GM18951 (cell line): ENCODE measurements at regions of chr17 and their contacts with region 1.

Region 1: GRCh38 chr17:20825539-20825938 is 217.3 kb downstream of the USP22 start:
- POLR2A ChIP-seq: no peak

Region 2: GRCh38 chr17:20721171-20721570 is 104.4 kb before region 1 on chr17:
- in situ Hi-C with region 1: no loop called
- POLR2A ChIP-seq: no peak

Region 3: DNA sequence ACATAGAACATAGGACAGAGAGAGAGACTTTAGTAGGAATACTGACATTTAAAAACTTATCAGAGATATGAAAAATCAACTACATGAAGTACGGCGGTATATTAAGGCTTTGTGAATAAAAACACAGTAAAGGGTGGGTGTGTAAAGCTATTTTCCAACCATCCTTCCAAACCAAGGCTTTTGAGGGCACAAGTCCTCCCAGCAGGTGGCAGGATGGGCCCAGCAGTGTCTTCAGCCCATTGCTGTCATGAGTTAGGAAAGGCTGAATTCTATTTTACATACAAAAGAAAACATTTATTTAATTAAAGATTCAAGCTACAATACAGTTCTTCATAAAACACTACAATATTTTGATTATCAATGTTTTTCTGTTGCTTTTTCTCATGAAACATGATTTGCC is 1708.2 kb after region 1 on chr17:
- in situ Hi-C with region 1: loop called (anchors 25 kb)
- POLR2A ChIP-seq: no peak